Activated naive CD4-positive, alpha-beta T cell treated with anti-CD3 and anti-CD28 coated beads for 36 hours (primary cell): ENCODE measurements at regions of chr11 and their contacts with region 1.

Region 1: GRCh38 chr11:17991783-17992433 is 20.9 kb downstream of the SERGEF start:
- DNase-seq: peak; percentile 67
- H3K4me3 Mint-ChIP-seq: no peak overlapping the region
- H3K27ac Mint-ChIP-seq: no peak overlapping the region
- H3K4me1 Mint-ChIP-seq: no peaks in the 10 kb centered on the region
- H3K27me3 Mint-ChIP-seq: no peaks in the 10 kb centered on the region

Region 2: GRCh38 chr11:17673951-17674350 is 318.0 kb before region 1 on chr11:
- CTCF ChIA-PET with region 1: no interaction called
- intact Hi-C with region 1: no loop called
- DNase-seq: no peak
- H3K4me3 Mint-ChIP-seq: no peak overlapping the region
- H3K27ac Mint-ChIP-seq: no peak overlapping the region
- H3K4me1 Mint-ChIP-seq: no peaks in the 10 kb centered on the region
- H3K27me3 Mint-ChIP-seq: peaks cover 14% of the 10 kb centered on the region

Region 3: DNA sequence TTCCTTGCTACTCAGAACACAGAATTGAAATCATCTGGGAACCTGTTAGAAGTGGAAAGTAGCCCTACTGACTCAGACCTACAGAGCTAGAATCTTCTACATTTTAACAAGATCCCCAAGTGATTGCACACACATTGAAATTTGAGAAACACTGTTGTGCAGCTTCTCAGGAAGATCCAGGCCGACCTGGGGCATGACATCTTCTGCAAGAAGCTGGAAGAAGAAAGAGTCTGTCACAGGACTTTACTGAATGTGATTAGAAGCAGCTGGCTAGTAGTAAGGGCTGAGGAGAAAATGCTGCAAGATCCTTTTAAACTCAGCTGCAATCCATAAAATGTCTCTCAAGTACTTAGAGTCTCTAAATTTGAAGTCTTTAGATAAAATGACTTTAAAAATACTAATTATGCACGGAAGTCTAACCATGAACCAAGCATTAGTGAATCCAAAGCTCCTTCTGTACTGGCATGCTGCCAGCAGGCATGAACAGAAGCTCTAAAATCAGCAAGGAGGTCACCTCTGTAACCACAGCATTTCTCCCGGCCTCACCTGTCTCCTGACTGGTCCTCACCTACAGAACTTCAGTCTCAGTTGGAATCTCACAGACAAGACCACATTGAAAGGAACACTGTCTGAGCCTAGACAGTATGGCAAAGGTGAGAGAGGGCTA is 64.1 kb before region 1 on chr11:
- CTCF ChIA-PET with region 1: no interaction called
- intact Hi-C with region 1: no loop called
- DNase-seq: no peak
- H3K4me3 Mint-ChIP-seq: no peak overlapping the region
- H3K27ac Mint-ChIP-seq: no peak overlapping the region
- H3K4me1 Mint-ChIP-seq: no peaks in the 10 kb centered on the region
- H3K27me3 Mint-ChIP-seq: no peaks in the 10 kb centered on the region

Region 4: GRCh38 chr11:17978553-17979287 is 13.2 kb before region 1 on chr11:
- CTCF ChIA-PET with region 1: interaction called, 14 read pairs
- intact Hi-C with region 1: no loop called
- DNase-seq: peak; percentile 36
- H3K4me3 Mint-ChIP-seq: no peak overlapping the region
- H3K27ac Mint-ChIP-seq: no peak overlapping the region
- H3K4me1 Mint-ChIP-seq: no peaks in the 10 kb centered on the region
- H3K27me3 Mint-ChIP-seq: no peaks in the 10 kb centered on the region

Region 5: GRCh38 chr11:18005376-18006129 is 13.6 kb after region 1 on chr11:
- CTCF ChIA-PET with region 1: interaction called, 15 read pairs
- intact Hi-C with region 1: no loop called
- DNase-seq: no peak
- H3K4me3 Mint-ChIP-seq: no peak overlapping the region
- H3K27ac Mint-ChIP-seq: no peak overlapping the region
- H3K4me1 Mint-ChIP-seq: peaks cover 1% of the 10 kb centered on the region
- H3K27me3 Mint-ChIP-seq: no peaks in the 10 kb centered on the region

Region 6: GRCh38 chr11:18105802-18106574 is 114.1 kb after region 1 on chr11 and contains the start of gene SAAL1:
- CTCF ChIA-PET with region 1: interaction called, 22 read pairs
- intact Hi-C with region 1: loop called (anchors 1 kb)
- DNase-seq: peak; percentile 93
- H3K4me3 Mint-ChIP-seq: peak within 1 kb of the TSS; percentile 90
- H3K27ac Mint-ChIP-seq: peak within 1 kb of the TSS; percentile 83
- H3K4me1 Mint-ChIP-seq: peaks cover 34% of the 10 kb centered on the region
- H3K27me3 Mint-ChIP-seq: no peaks in the 10 kb centered on the region
- total RNA-seq, gene SAAL1: 36.4 to 37.0 TPM

Region 7: GRCh38 chr11:18757811-18758210 is 765.9 kb after region 1 on chr11:
- CTCF ChIA-PET with region 1: no interaction called
- intact Hi-C with region 1: loop called (anchors 5 kb)
- DNase-seq: no peak
- H3K4me3 Mint-ChIP-seq: no peak overlapping the region
- H3K27ac Mint-ChIP-seq: no peak overlapping the region
- H3K4me1 Mint-ChIP-seq: no peaks in the 10 kb centered on the region
- H3K27me3 Mint-ChIP-seq: no peaks in the 10 kb centered on the region